Tibial artery (tissue), 4 donors: ENCODE measurements at regions of chr2 and their contacts with region 1.

Region 1: GRCh38 chr2:97995734-97996624 is at the start of gene TMEM131:
- DNase-seq: peak; percentile 92 to 95
- H3K4me3 ChIP-seq: peak within 1 kb of the TSS; percentile 78 to 79
- H3K27ac ChIP-seq: peak within 1 kb of the TSS; percentile 93 to 97
- H3K4me1 ChIP-seq: peaks cover 0 to 35% (median 10%) of the 10 kb centered on the region in 4 donors
- H3K27me3 ChIP-seq: no peaks in the 10 kb centered on the region
- CTCF ChIP-seq: no peak

Region 2: DNA sequence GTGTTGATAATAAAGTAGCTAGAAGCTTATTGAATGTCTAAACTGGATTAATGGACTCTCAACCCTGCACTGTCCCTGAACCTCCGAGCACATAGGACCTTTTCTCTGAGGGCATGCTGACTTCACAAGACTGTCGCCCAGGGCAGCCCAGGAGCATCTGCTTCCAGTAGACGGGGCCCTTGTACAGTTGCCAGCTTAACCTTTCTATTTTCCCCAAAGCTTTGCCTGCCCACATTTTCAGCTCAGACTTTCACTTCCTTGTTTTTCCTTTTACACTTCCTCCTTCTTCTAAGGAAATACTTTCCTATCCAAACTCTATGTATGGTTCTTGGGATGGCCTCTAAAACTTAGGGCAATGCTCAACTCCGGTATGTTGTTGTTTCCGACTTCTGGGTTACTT is 92.3 kb after region 1 on chr2:
- intact Hi-C with region 1: no loop called
- DNase-seq: peak in 1 of 2 donors; percentile 41
- H3K4me3 ChIP-seq: no peak overlapping the region
- H3K27ac ChIP-seq: no peak overlapping the region
- H3K4me1 ChIP-seq: peaks cover 0 to 16% (median 10%) of the 10 kb centered on the region in 4 donors
- H3K27me3 ChIP-seq: peaks cover 0 to 8% of the 10 kb centered on the region in 2 donors
- CTCF ChIP-seq: no peak

Region 3: DNA sequence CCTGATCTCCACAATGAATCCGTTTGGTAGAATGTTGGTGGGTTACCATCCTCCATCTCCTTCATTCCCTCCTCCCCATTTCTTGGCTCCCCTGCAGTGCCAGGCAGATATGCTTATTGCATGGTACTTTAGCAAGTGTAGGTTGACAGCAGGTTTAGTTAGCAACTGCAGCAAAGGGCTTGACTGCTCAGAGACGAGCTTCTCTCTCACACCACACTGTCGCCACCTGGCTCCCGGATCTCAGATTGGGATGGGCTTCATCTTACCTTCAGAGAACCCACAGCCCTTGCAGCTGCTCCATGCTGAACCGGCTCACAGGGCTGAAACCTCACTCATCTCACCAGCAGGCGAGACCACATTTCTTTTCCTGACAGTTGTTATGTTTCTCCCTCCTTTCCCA is 179.8 kb after region 1 on chr2:
- intact Hi-C with region 1: loop called (anchors 10 kb)
- DNase-seq: no peak
- H3K4me3 ChIP-seq: no peak overlapping the region
- H3K27ac ChIP-seq: no peak overlapping the region
- H3K4me1 ChIP-seq: no peaks in the 10 kb centered on the region
- H3K27me3 ChIP-seq: peaks cover 0 to 12% of the 10 kb centered on the region in 2 donors
- CTCF ChIP-seq: no peak